HCT116 (cell line): ENCODE measurements at regions of chr10 and their contacts with region 1.

Region 1: GRCh38 chr10:88687853-88688467 is 18.1 kb upstream of the LIPK start:
- DNase-seq: peak; percentile 32
- ATAC-seq: peak; percentile 42; the same call in 1 of the 2 replicates
- H3K4me3 ChIP-seq: no peak overlapping the region
- H3K27ac ChIP-seq: no peak overlapping the region
- H3K4me1 ChIP-seq: no peaks in the 10 kb centered on the region
- H3K27me3 ChIP-seq: no peaks in the 10 kb centered on the region
- CTCF ChIP-seq: peak; percentile 66 to 89 (median 80)
- POLR2A ChIP-seq: no peak
- RAD21 ChIP-seq: peak; percentile 82

Region 2: GRCh38 chr10:88281592-88282347 is 406.2 kb before region 1 on chr10:
- CTCF ChIA-PET with region 1: no interaction called
- POLR2A ChIA-PET with region 1: no interaction called
- RAD21 ChIA-PET with region 1: no interaction called
- intact Hi-C with region 1: no loop called
- DNase-seq: no peak
- ATAC-seq: no peak
- H3K4me3 ChIP-seq: no peak overlapping the region
- H3K27ac ChIP-seq: no peak overlapping the region
- H3K4me1 ChIP-seq: no peaks in the 10 kb centered on the region; a peak in 1 of 4 replicates
- H3K27me3 ChIP-seq: no peaks in the 10 kb centered on the region
- CTCF ChIP-seq: no peak
- POLR2A ChIP-seq: no peak
- RAD21 ChIP-seq: no peak

Region 3: DNA sequence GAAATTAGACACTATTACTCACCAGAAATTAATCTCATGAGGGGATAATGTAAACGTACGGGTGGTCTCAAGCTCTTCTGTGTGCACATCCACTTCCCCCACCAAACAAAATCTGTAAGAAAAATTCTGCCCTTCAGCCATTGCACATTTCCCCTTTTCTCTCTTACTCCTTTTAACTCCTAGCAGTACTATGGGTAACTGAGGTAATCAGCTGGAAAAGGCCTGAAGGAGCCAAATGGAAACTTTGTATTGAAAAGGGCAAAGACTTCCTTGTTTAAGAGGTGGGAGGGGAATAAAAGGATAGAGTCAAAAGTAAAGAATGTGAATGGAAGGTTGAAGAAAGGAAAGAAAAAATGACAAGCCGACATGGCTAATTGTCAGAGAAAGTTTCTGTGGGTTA is 378.6 kb before region 1 on chr10:
- CTCF ChIA-PET with region 1: no interaction called
- POLR2A ChIA-PET with region 1: no interaction called
- RAD21 ChIA-PET with region 1: no interaction called
- intact Hi-C with region 1: no loop called
- DNase-seq: no peak
- ATAC-seq: no peak
- H3K4me3 ChIP-seq: no peak overlapping the region
- H3K27ac ChIP-seq: no peak overlapping the region
- H3K4me1 ChIP-seq: no peaks in the 10 kb centered on the region
- H3K27me3 ChIP-seq: no peaks in the 10 kb centered on the region
- CTCF ChIP-seq: no peak
- POLR2A ChIP-seq: no peak
- RAD21 ChIP-seq: no peak

Region 4: GRCh38 chr10:88791924-88792323 is 104.0 kb after region 1 on chr10:
- CTCF ChIA-PET with region 1: no interaction called
- POLR2A ChIA-PET with region 1: no interaction called
- RAD21 ChIA-PET with region 1: no interaction called
- intact Hi-C with region 1: loop called (anchors 5 kb)
- DNase-seq: peak; percentile 32
- ATAC-seq: peak; percentile 94
- H3K4me3 ChIP-seq: no peak overlapping the region
- H3K27ac ChIP-seq: no peak overlapping the region
- H3K4me1 ChIP-seq: peaks cover 6 to 10% of the 10 kb centered on the region in 2 experiments; a peak in 3 of 4 replicates
- H3K27me3 ChIP-seq: no peaks in the 10 kb centered on the region
- CTCF ChIP-seq: peak; percentile 66 to 77 (median 77)
- POLR2A ChIP-seq: no peak
- RAD21 ChIP-seq: peak; percentile 57

Region 5: GRCh38 chr10:88810196-88810961 is 122.4 kb after region 1 on chr10:
- CTCF ChIA-PET with region 1: interaction called, 4 read pairs
- POLR2A ChIA-PET with region 1: no interaction called
- RAD21 ChIA-PET with region 1: interaction called in 1 of 2 experiments, 4 read pairs
- intact Hi-C with region 1: loop called (anchors 1 kb)
- DNase-seq: peak; percentile 60
- ATAC-seq: peak; percentile 98
- H3K4me3 ChIP-seq: no peak overlapping the region
- H3K27ac ChIP-seq: no peak overlapping the region
- H3K4me1 ChIP-seq: no peaks in the 10 kb centered on the region
- H3K27me3 ChIP-seq: no peaks in the 10 kb centered on the region
- CTCF ChIP-seq: peak; percentile 83 to 86 (median 84)
- POLR2A ChIP-seq: no peak
- RAD21 ChIP-seq: peak; percentile 82